ENCODE measurements at regions of chr19 and their contacts with region 1.

Region 1: GRCh38 chr19:10238172-10238783 is 7.1 kb upstream of the S1PR2 start:
- DNase-seq: no peak
- ATAC-seq: peak; percentile 47
- H3K4me3 ChIP-seq: no peak overlapping the region
- H3K27ac ChIP-seq: peak overlapping the region; percentile 54
- H3K4me1 ChIP-seq: peaks cover 57% of the 10 kb centered on the region
- H3K27me3 ChIP-seq: no peaks in the 10 kb centered on the region
- CTCF ChIP-seq: no peak
- EP300 ChIP-seq: no peak
- POLR2A ChIP-seq: no peak
- RAD21 ChIP-seq: no peak

Region 2: GRCh38 chr19:10142701-10143375 is 95.4 kb before region 1 on chr19:
- CTCF ChIA-PET with region 1: no interaction called
- POLR2A ChIA-PET with region 1: no interaction called
- RAD21 ChIA-PET with region 1: no interaction called
- SMC1A ChIA-PET with region 1: no interaction called
- in situ Hi-C with region 1: no loop called
- intact Hi-C with region 1: no loop called
- DNase-seq: no peak
- ATAC-seq: no peak
- H3K4me3 ChIP-seq: no peak overlapping the region
- H3K27ac ChIP-seq: no peak overlapping the region
- H3K4me1 ChIP-seq: no peaks in the 10 kb centered on the region
- H3K27me3 ChIP-seq: no peaks in the 10 kb centered on the region
- CTCF ChIP-seq: no peak
- EP300 ChIP-seq: no peak
- POLR2A ChIP-seq: no peak
- RAD21 ChIP-seq: no peak

Region 3: DNA sequence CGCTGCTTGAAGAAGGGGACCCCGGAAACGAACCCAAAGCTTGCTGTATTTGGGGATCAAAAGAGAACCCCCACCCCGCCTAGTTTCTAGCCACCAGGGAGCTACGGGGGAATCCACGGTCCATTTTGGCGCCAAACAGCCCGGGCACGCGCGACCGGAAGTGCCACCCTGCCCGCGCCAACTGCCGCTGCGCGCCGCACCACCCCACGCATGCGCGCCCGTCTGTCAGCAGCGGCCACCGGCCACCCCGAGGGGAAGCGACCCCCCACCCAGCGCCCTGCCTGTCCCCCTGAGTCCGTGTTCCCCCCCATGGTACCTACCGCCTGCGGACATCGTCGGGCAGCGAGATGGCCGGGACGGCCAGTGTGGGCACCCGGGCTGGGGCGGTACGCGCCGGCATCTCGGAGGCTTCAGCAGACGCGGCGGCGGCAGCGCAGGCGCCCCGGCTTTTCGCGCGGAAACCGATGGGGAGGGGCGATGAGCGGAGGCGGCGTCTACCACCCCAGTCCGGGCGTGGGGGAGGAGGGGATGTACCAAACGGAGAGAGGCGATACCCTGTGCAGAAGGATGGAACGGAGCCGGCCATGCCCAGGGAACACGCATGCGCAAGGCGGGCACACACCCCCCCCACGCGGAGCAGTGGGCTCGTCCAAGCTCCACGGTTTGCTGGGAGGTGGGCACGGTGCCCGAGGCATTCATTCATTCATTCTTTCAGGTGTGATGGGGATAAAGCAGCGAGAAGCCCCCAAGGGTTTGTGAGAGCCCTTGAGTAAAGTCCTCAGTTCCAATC is 43.6 kb before region 1 on chr19 and contains the start of gene DNMT1:
- CTCF ChIA-PET with region 1: interaction called, 3 read pairs
- POLR2A ChIA-PET with region 1: interaction called, 4 read pairs
- RAD21 ChIA-PET with region 1: interaction called, 3 read pairs
- SMC1A ChIA-PET with region 1: interaction called, 3 read pairs
- in situ Hi-C with region 1: no loop called
- intact Hi-C with region 1: loop called (anchors 5 kb)
- DNase-seq: peak; percentile 87
- ATAC-seq: peak; percentile 95
- H3K4me3 ChIP-seq: peak within 1 kb of the TSS; percentile 100
- H3K27ac ChIP-seq: peak within 1 kb of the TSS; percentile 91
- H3K4me1 ChIP-seq: peaks cover 23% of the 10 kb centered on the region
- H3K27me3 ChIP-seq: no peaks in the 10 kb centered on the region
- CTCF ChIP-seq: no peak
- EP300 ChIP-seq: peak in 1 of 2 experiments; percentile 61; a peak in 2 of 4 replicates
- POLR2A ChIP-seq: peak; percentile 98
- RAD21 ChIP-seq: no peak
- polyA plus RNA-seq, gene DNMT1: 128 to 149 TPM